Sciatic nerve (tissue), 2 donors: ENCODE measurements at regions of chr3 and their contacts with region 1.

Region 1: GRCh38 chr3:63824309-63824708 is 5.2 kb downstream of the C3orf49 start:
- DNase-seq: no peak
- ATAC-seq: no peak

Region 2: DNA sequence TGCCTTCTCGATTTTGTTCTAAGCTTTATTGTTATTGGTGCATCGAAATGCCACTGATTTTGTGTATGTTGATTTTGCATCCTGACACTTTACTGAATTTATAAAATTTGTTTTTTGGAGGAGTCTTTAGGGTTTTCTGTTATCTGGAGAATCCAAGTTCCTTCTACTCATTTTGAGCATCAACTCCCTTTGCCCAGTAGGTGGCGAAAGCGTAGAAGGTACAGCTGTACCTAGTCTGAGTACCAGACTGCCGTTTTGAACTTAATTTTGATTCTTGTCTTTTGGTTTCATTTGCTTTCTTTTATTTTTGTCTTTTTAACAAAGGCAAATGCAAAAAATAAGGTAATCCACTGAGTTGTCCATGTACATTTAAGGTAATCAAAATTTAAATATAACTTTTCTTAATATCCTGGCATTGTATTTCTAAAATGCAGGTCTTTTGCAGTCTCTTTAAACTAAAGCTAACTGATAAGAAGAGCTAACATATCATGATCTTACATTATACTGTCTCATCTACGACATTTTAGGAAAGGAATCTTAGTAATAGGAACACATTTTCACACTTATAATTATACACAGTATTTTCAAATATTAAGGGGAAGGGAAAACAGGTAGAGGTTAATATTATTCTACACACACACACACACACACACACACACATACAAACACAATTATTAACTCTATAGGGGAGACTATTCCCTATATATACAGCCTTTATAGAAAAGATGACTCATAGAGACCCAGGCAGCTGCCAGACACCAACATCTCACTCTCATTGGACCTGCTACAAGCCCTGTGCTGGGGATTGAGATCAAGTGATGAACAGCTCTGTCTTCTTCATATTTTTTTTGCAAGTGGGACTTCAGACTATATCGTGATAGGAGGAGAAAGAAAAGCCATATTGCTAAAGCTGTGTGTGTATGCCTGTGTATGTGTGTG is 474.5 kb before region 1 on chr3:
- intact Hi-C with region 1: loop called (anchors 10 kb)
- DNase-seq: no peak
- ATAC-seq: no peak